ENCODE measurements at regions of chr5 and their contacts with region 1.

Region 1: GRCh38 chr5:151239237-151239861 is 13.6 kb upstream of the GM2A start:
- DNase-seq: peak; percentile 82 to 90
- ATAC-seq: peak; percentile 75 to 81 (median 78)
- H3K4me3 ChIP-seq: peak overlapping the region; percentile 59
- H3K27ac ChIP-seq: peak overlapping the region; percentile 87
- H3K4me1 ChIP-seq: peaks cover 16% of the 10 kb centered on the region
- H3K27me3 ChIP-seq: no peaks in the 10 kb centered on the region
- CTCF ChIP-seq: peak; percentile 93

Region 2: GRCh38 chr5:151126199-151126645 is 113.1 kb before region 1 on chr5:
- intact Hi-C with region 1: loop called (anchors 1 kb)
- DNase-seq: peak; percentile 83 to 91
- ATAC-seq: peak; percentile 67 to 72 (median 71)
- H3K4me3 ChIP-seq: no peak overlapping the region
- H3K27ac ChIP-seq: peak overlapping the region; percentile 86
- H3K4me1 ChIP-seq: peaks cover 36% of the 10 kb centered on the region
- H3K27me3 ChIP-seq: no peaks in the 10 kb centered on the region
- CTCF ChIP-seq: peak; percentile 90

Region 3: DNA sequence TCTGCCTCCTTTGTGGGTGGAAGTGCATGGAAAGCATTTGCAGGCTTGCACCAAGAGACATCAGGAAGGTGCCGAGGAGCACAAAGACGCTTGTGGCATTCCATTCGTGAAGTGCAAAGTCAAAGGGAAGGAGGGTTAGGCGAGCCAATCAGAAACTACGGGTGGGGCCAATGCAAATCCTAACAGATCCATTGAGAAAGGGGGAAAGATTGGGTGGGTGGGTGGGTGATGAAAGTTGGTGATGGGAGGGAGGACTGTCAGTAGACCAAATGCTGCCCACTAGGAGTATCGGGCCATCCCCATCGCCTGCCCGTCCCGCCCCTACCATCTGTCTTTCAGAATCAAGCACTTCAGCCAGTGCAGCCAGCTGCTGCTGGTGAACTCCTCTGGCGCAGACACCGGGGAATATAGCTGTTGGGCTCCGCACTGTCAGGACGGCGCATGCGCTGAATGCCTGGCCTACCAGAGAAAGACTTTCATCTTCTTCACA is 64.7 kb before region 1 on chr5:
- intact Hi-C with region 1: loop called in 1 of 2 experiments (anchors 10 kb)
- DNase-seq: peak; percentile 51 to 75
- ATAC-seq: peak; percentile 78 to 88 (median 83)
- H3K4me3 ChIP-seq: peak overlapping the region; percentile 28
- H3K27ac ChIP-seq: peak overlapping the region; percentile 55
- H3K4me1 ChIP-seq: peaks cover 21% of the 10 kb centered on the region
- H3K27me3 ChIP-seq: no peaks in the 10 kb centered on the region
- CTCF ChIP-seq: no peak

Region 4: DNA sequence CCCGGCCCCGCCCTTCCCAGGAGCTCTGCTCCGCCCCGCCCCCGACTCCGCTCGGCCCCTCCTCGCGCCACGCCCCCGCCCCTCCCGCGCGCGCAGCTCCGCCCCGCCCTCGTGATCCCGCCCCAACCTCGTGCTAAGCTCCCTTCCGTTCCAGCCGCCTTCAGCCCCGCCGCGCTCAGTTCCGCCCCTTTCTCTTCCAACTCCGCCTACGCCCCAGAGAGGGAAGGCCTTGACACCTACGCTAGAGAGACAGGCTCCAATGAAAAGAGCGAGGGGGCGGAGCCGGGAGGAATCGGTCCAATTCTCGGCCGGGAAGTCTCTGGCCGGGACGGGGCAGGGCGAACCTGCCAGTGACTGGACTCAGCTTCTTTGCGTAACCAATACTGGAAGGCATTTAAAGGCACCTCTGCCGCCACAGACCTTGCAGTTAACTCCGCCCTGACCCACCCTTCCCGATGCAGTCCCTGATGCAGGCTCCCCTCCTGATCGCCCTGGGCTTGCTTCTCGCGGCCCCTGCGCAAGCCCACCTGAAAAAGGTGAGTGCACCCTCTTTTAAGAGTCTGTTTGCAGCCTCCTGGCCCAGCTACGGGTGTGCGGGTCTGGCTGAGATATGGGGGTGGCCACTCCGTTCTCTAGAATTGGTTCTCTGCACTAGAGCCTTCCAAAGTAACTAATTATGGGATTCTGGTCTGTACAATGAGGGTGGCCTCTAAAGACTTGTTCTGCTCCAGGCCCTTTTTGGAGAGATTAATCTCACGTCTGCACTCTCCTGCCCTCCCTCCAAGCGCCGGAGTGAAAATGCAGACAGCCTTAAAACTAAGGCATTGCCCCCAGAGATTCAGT is 13.6 kb after region 1 on chr5 and contains the start of gene GM2A:
- intact Hi-C with region 1: no loop called
- DNase-seq: peak; percentile 99 to 100
- ATAC-seq: peak; percentile 95 to 98 (median 96)
- H3K4me3 ChIP-seq: peak within 1 kb of the TSS; percentile 91
- H3K27ac ChIP-seq: peak within 1 kb of the TSS; percentile 81
- H3K4me1 ChIP-seq: peaks cover 25% of the 10 kb centered on the region
- H3K27me3 ChIP-seq: no peaks in the 10 kb centered on the region
- CTCF ChIP-seq: no peak
- total RNA-seq, gene GM2A: 4.0 to 12.1 (median 8.0) TPM